Psoas muscle (tissue), 8 donors: ENCODE measurements at regions of chr6 and their contacts with region 1.

Region 1: DNA sequence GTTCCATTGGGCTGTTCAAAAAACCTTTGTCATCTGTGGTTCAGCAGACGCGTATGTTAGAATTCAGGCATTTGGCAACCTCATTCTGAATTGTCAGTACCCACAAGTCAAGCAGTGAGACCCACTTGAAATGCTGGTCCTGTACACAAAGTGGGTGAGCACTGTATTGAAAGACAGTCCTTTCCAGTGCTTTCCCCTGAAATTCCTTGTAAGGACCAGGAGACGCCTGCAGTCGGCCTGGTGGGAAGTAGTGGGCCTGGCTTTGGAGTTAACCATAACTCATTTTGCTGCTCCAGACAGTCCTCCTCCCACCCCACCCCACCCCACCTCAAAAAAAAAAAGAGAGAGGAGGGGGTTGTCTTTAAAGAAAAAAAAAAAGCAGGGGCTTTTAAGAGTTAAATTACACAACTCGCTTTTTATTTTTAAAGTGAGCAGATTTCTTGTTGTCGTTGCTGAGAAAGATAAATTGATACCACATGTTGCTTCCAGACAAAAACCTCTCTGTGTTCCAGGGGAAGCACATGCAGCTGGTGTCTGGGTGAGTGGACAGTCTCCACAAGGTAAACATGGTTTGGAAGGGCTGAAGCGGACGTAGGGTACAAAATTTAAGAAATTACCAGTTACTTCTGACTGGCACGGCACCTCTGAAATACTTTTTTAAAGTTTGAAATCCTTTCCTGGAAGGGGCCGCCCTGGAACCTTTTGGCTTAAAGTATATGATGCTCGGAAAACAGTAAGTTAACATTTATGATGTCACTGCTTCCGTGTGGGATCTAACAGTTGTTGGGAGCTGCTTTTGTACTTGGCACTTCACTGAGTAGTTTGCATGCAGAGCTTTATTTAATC is 95.3 kb downstream of the FOXO3 start:
- DNase-seq: no peak
- ATAC-seq: peak; percentile 32 to 55 (median 48)
- H3K4me3 ChIP-seq: peak overlapping the region; percentile 66
- H3K27ac ChIP-seq: peak overlapping the region; percentile 84
- H3K4me1 ChIP-seq: peaks cover 91% of the 10 kb centered on the region
- H3K27me3 ChIP-seq: no peaks in the 10 kb centered on the region
- CTCF ChIP-seq: no peak

Region 2: DNA sequence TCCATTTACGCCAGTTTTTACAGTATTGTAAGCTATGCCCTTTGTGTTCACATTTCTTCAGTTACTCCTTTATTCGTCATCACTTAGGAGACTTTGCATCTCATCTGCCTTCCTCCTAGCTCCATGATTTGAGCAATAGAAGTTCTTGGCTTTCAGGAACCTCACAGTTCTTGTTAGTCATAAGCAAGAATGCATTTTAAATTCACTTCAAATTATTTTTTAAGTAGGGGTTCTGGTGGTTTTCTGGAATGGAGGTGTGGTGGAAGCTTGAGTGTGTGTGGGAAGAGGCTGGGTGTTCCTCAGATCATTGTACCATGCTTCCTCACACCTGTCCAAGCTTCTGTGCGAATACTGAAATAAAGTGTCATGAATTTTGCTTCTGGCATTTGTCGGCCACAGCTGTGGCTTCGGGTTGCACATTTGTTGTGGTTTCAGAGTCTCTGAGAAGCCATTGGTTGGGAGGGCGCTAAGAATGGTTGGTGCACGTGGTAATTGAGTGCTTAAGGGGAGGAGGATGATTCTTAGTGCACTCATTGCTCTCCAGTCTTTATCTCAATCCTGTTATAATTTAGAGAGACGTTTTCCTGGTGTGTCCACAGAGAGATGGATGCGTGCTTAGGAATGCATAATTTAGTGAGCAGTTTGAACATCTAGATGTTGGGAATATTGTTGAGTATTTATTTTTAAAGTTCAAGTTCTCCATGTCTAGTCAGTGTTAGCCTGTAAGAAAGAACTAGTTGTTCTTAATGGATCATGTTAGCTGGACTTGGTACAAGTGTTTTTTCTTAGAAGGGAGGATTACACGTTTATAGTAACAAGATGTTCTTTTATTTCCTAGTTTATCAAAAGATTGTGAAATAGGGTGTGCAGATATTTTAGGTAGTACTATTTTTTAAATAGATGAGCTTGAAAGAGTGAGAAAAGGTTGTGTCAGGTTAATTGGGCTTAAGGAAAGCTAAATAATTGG is 63.4 kb before region 1 on chr6:
- intact Hi-C with region 1: loop called in 1 of 2 experiments (anchors 5 kb)
- DNase-seq: peak; percentile 60 to 84
- ATAC-seq: peak; percentile 79 to 86 (median 83)
- H3K4me3 ChIP-seq: no peak overlapping the region
- H3K27ac ChIP-seq: peak overlapping the region; percentile 82
- H3K4me1 ChIP-seq: peaks cover 100% of the 10 kb centered on the region
- H3K27me3 ChIP-seq: no peaks in the 10 kb centered on the region
- CTCF ChIP-seq: no peak

Region 3: DNA sequence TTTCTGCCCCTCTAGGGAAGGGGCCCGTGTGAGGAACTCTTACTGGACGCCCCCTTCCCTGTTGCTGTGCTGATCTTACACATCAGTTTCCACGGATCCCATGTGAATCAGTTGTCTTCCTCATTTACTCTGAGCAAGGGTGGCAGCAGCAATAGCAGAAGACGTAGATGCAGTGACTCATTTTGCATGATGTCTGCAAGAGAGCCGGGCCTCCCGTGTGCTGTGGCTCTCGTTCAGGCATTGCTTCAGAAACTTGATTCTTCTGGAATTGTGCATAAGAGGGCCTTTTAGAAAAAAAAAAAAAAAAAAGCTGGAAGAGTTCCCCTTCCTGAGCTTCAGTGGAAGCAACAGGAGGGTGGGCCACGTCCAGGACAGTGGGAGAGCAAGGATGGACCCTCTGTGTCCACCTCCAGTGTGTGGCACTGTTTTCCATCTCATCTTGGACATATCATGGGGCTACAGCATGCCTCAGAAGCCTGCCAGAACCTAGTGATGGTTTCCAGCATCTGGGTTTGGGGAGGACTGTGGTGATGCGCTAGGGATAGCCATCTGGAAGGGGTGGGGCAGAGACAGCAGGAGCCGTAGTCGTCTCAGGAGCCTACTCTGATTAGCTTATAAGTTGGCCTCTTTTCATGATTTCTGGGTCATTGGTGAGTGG is 33.3 kb before region 1 on chr6:
- intact Hi-C with region 1: loop called in 1 of 2 experiments (anchors 5 kb)
- DNase-seq: peak; percentile 60 to 71
- ATAC-seq: peak; percentile 74 to 80 (median 77)
- H3K4me3 ChIP-seq: no peak overlapping the region
- H3K27ac ChIP-seq: peak overlapping the region; percentile 65
- H3K4me1 ChIP-seq: peaks cover 98% of the 10 kb centered on the region
- H3K27me3 ChIP-seq: no peaks in the 10 kb centered on the region
- CTCF ChIP-seq: no peak